CD4-positive, alpha-beta memory T cell (primary cell): ENCODE measurements at regions of chr1 and their contacts with region 1.

Region 1: GRCh38 chr1:147273409-147274336 is 31.2 kb downstream of the CHD1L start:
- DNase-seq: peak in 4 of 5 donors; percentile 36 to 45 (median 44)
- H3K4me3 ChIP-seq: no peak overlapping the region
- H3K4me3 Mint-ChIP-seq: no peak overlapping the region
- H3K27ac ChIP-seq: no peak overlapping the region
- H3K27ac Mint-ChIP-seq: no peak overlapping the region
- H3K4me1 ChIP-seq: no peaks in the 10 kb centered on the region
- H3K4me1 Mint-ChIP-seq: peaks cover 0 to 6% (median 4%) of the 10 kb centered on the region in 4 donors
- H3K27me3 ChIP-seq: no peaks in the 10 kb centered on the region
- H3K27me3 Mint-ChIP-seq: no peaks in the 10 kb centered on the region

Region 2: GRCh38 chr1:147225193-147225730 is 48.4 kb before region 1 on chr1 and contains the start of gene FMO5:
- CTCF ChIA-PET with region 1: no interaction called
- POLR2A ChIA-PET with region 1: no interaction called
- intact Hi-C with region 1: no loop called
- DNase-seq: peak; percentile 42 to 73 (median 54)
- H3K4me3 ChIP-seq: peak within 1 kb of the TSS; percentile 63 to 96
- H3K4me3 Mint-ChIP-seq: peak within 1 kb of the TSS; percentile 89 to 98 (median 97)
- H3K27ac ChIP-seq: peak within 1 kb of the TSS; percentile 41
- H3K27ac Mint-ChIP-seq: peak within 1 kb of the TSS; percentile 78 to 97 (median 89)
- H3K4me1 ChIP-seq: peaks cover 11% of the 10 kb centered on the region
- H3K4me1 Mint-ChIP-seq: peaks cover 7 to 36% (median 14%) of the 10 kb centered on the region in 4 donors
- H3K27me3 ChIP-seq: no peaks in the 10 kb centered on the region
- H3K27me3 Mint-ChIP-seq: no peaks in the 10 kb centered on the region
- total RNA-seq, gene FMO5: 1.0 to 1.5 TPM

Region 3: GRCh38 chr1:147389532-147390524 is 116.2 kb after region 1 on chr1:
- CTCF ChIA-PET with region 1: interaction called, 37 read pairs
- POLR2A ChIA-PET with region 1: no interaction called
- intact Hi-C with region 1: no loop called
- DNase-seq: peak; percentile 16 to 33 (median 27)
- H3K4me3 ChIP-seq: no peak overlapping the region
- H3K4me3 Mint-ChIP-seq: no peak overlapping the region
- H3K27ac ChIP-seq: no peak overlapping the region
- H3K27ac Mint-ChIP-seq: peak overlapping the region in 1 of 7 donors; percentile 32
- H3K4me1 ChIP-seq: no peaks in the 10 kb centered on the region
- H3K4me1 Mint-ChIP-seq: no peaks in the 10 kb centered on the region
- H3K27me3 ChIP-seq: peaks cover 5% of the 10 kb centered on the region
- H3K27me3 Mint-ChIP-seq: peaks cover 8 to 17% of the 10 kb centered on the region in 2 donors

Region 4: DNA sequence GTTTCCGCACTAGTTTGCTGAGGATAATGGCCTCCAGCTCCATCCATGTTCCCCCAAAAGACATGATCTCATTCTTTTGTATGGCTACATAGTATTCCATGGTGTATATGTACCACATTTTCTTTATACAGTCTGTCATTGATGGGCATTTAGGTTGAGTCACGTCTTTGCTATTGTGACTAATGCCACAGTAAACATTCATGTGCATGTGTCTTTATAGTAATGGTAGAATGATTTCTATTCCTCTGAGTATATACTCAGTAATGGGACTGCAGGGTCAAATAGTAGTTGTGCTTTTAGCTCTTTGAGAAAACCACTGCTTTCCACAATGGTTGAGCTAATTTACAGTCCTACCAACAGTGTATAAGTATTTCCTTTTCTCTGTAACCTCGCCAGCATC is 189.3 kb after region 1 on chr1:
- CTCF ChIA-PET with region 1: no interaction called
- POLR2A ChIA-PET with region 1: no interaction called
- intact Hi-C with region 1: no loop called
- DNase-seq: no peak
- H3K4me3 ChIP-seq: no peak overlapping the region
- H3K4me3 Mint-ChIP-seq: no peak overlapping the region
- H3K27ac ChIP-seq: no peak overlapping the region
- H3K27ac Mint-ChIP-seq: no peak overlapping the region
- H3K4me1 ChIP-seq: no peaks in the 10 kb centered on the region
- H3K4me1 Mint-ChIP-seq: no peaks in the 10 kb centered on the region
- H3K27me3 ChIP-seq: no peaks in the 10 kb centered on the region
- H3K27me3 Mint-ChIP-seq: peaks cover 32 to 37% of the 10 kb centered on the region in 2 donors